ENCODE measurements at regions of chr7 and their contacts with region 1.

Region 1: GRCh38 chr7:130010689-130011412 is 40.3 kb downstream of the ZC3HC1 start:
- DNase-seq: peak; percentile 77
- H3K4me3 ChIP-seq: no peak overlapping the region
- H3K27ac ChIP-seq: peak overlapping the region; percentile 93
- H3K4me1 ChIP-seq: peaks cover 25% of the 10 kb centered on the region
- H3K27me3 ChIP-seq: no peaks in the 10 kb centered on the region
- CTCF ChIP-seq: peak; percentile 94 to 96

Region 2: GRCh38 chr7:129611246-129612111 is 399.4 kb before region 1 on chr7 and contains the start of gene NRF1:
- CTCF ChIA-PET with region 1: no interaction called
- dilution Hi-C with region 1: no loop called
- in situ Hi-C with region 1: no loop called
- intact Hi-C with region 1: loop called (anchors 2 kb)
- DNase-seq: peak; percentile 90
- H3K4me3 ChIP-seq: peak within 1 kb of the TSS; percentile 77 to 95 (median 87)
- H3K27ac ChIP-seq: peak within 1 kb of the TSS; percentile 80
- H3K4me1 ChIP-seq: peaks cover 27% of the 10 kb centered on the region
- H3K27me3 ChIP-seq: no peaks in the 10 kb centered on the region
- CTCF ChIP-seq: peak in 1 of 2 donors; percentile 12
- total RNA-seq, gene NRF1: 11.3 to 14.3 TPM

Region 3: GRCh38 chr7:129630341-129630740 is 380.5 kb before region 1 on chr7:
- CTCF ChIA-PET with region 1: no interaction called
- dilution Hi-C with region 1: no loop called
- in situ Hi-C with region 1: no loop called
- intact Hi-C with region 1: no loop called
- DNase-seq: no peak
- H3K4me3 ChIP-seq: no peak overlapping the region
- H3K27ac ChIP-seq: no peak overlapping the region
- H3K4me1 ChIP-seq: no peaks in the 10 kb centered on the region
- H3K27me3 ChIP-seq: no peaks in the 10 kb centered on the region
- CTCF ChIP-seq: no peak

Region 4: GRCh38 chr7:129684777-129685176 is 326.1 kb before region 1 on chr7:
- CTCF ChIA-PET with region 1: no interaction called
- dilution Hi-C with region 1: loop called (anchors 25 kb)
- in situ Hi-C with region 1: no loop called
- intact Hi-C with region 1: no loop called
- DNase-seq: no peak
- H3K4me3 ChIP-seq: no peak overlapping the region
- H3K27ac ChIP-seq: no peak overlapping the region
- H3K4me1 ChIP-seq: no peaks in the 10 kb centered on the region
- H3K27me3 ChIP-seq: no peaks in the 10 kb centered on the region
- CTCF ChIP-seq: no peak

Region 5: DNA sequence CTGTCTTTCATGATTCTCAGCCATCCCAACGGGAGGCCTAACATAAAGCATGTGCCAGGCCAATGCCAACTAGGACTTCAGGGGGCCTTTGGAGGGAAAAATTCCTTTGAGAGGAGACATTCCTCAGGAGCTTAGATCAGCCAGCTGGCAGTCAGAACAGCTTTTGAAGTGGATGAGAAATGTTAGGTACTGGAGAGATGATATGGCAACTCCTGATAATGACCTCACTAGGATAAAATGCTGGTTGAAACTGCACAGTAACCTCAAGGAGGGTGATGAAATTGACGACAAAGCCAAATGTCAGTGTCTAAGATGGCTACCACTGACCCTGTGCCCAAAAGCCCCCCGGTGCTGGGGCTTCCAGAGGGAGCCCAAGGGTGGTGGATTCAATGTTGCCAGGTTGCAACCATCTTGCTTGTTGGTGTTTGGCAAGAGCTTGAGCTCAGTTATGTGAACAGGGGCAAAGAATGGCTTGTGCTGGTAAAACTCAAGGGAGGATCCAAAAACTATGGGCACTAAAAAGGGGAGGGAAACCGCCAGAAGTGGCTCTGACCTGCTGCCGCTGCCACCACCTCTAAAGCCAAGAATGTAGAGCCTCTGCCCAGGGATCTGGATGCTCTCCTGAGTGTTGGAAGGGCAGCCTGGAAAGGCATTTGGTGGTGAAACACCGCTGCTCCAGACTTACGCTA is 179.3 kb before region 1 on chr7:
- CTCF ChIA-PET with region 1: interaction called, 15 read pairs
- dilution Hi-C with region 1: no loop called
- in situ Hi-C with region 1: loop called (anchors 5 to 25 kb)
- intact Hi-C with region 1: loop called (anchors 1 kb)
- DNase-seq: peak; percentile 89
- H3K4me3 ChIP-seq: no peak overlapping the region
- H3K27ac ChIP-seq: peak overlapping the region; percentile 77
- H3K4me1 ChIP-seq: peaks cover 30% of the 10 kb centered on the region
- H3K27me3 ChIP-seq: no peaks in the 10 kb centered on the region
- CTCF ChIP-seq: no peak

Region 6: GRCh38 chr7:129952653-129953560 is 57.9 kb before region 1 on chr7 and contains the start of gene UBE2H:
- CTCF ChIA-PET with region 1: no interaction called
- dilution Hi-C with region 1: loop called (anchors 5 kb)
- in situ Hi-C with region 1: loop called (anchors 5 to 10 kb)
- intact Hi-C with region 1: loop called (anchors 1 kb)
- DNase-seq: peak; percentile 92
- H3K4me3 ChIP-seq: peak within 1 kb of the TSS; percentile 69 to 91 (median 76)
- H3K27ac ChIP-seq: peak within 1 kb of the TSS; percentile 96
- H3K4me1 ChIP-seq: peaks cover 30% of the 10 kb centered on the region
- H3K27me3 ChIP-seq: no peaks in the 10 kb centered on the region
- CTCF ChIP-seq: no peak
- total RNA-seq, gene UBE2H: 122 to 126 TPM

Region 7: GRCh38 chr7:129989466-129989865 is 21.4 kb before region 1 on chr7:
- CTCF ChIA-PET with region 1: no interaction called
- dilution Hi-C with region 1: no loop called
- in situ Hi-C with region 1: no loop called
- intact Hi-C with region 1: loop called (anchors 1 kb)
- DNase-seq: peak; percentile 24
- H3K4me3 ChIP-seq: no peak overlapping the region
- H3K27ac ChIP-seq: no peak overlapping the region
- H3K4me1 ChIP-seq: no peaks in the 10 kb centered on the region
- H3K27me3 ChIP-seq: no peaks in the 10 kb centered on the region
- CTCF ChIP-seq: no peak

Measured in mammary epithelial cell (primary cell).